ENCODE measurements at regions of chr13 and their contacts with region 1.

Region 1: DNA sequence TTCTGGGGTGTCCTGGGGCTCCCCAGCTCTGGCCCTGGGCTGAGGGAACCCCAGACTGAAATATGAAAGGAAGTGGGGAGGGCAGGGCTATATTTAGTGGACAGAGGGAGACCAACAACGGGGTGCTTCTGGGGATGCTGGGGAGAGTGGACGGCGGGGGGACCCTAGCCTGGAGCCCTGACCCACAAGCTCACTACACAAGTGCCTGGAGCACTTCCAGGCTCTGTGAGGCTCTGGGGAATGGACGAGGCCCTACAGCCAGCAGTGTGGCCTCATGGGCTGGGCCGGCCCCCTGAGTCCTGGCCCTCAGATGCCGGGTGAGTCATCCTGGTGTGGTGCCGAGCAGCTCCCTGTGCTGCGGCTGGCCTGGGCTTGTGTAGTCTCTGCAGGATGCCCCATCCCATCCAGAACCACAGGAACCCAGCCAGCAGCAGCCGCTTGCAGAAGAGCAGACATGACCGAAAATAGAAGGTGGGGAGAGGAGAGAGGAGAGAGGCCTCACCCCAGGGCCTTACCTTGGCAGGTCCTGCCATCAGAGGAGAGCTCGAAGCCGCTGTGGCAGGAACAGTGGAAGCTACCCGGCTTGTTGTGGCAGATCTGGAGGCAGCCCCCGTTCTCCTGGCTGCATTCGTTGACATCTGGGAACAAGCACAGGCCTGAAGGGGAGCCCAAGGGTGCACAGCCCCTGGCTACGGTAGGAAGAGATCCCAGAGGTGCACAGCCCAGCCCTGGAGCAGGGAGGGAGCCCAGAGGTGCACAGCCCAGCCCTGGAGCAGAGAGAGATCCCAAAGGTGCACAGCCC is 26.1 kb downstream of the GAS6 start:
- DNase-seq: peak; percentile 92
- H3K4me3 ChIP-seq: no peak overlapping the region
- H3K27ac ChIP-seq: peak overlapping the region; percentile 90
- H3K4me1 ChIP-seq: peaks cover 13% of the 10 kb centered on the region
- H3K27me3 ChIP-seq: no peaks in the 10 kb centered on the region
- CTCF ChIP-seq: no peak
- POLR2A ChIP-seq: peak; percentile 40

Region 2: DNA sequence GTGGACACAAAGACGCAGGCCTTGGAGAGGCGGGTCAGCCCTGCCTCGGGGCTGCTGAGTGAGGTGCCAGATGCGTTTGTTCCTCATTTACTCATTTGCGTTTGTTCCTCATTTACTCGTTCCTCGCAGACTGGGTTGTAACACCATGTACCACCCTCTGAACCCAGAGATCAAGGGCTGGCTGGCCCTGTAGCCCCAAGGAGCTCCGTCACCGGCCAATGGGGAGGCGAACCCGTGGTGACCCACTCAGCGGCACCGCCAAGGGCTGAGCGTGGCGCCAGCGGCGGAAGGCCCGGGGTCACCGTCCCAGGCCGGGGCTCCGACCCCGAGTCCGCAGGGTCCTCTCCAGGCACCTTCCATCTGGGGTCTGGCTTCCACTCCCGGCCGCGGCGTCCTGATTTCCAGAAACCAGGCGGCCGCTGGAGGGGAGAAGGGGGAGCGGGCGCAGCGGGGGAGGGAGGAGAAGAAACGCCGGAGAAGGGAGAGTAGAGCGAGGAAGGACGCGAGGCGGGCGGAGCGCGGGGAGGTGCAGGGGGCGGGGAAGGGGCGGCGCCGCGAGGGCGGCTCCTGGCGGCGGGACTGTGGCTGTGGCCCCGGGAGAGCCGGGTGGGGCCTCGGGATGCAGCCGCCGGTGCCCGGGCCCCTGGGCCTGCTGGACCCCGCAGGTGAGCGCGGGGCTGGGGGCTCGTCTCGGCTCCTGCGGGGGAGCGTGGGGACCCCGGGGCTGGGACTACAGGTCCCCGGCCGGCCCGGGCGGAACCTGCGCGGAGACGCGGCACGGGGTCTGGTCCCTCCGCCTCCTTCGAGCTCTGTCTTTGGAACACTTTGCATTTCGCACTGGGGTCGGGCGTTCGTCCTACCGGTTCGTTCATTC is 78.9 kb before region 1 on chr13 and contains the start of gene TMEM255B:
- CTCF ChIA-PET with region 1: no interaction called
- POLR2A ChIA-PET with region 1: no interaction called
- dilution Hi-C with region 1: no loop called
- intact Hi-C with region 1: no loop called
- DNase-seq: peak; percentile 81
- H3K4me3 ChIP-seq: peak within 1 kb of the TSS; percentile 80 to 93 (median 91)
- H3K27ac ChIP-seq: peak within 1 kb of the TSS; percentile 87
- H3K4me1 ChIP-seq: peaks cover 18% of the 10 kb centered on the region
- H3K27me3 ChIP-seq: no peaks in the 10 kb centered on the region
- CTCF ChIP-seq: peak in 1 of 2 donors; percentile 28
- POLR2A ChIP-seq: peak; percentile 78
- total RNA-seq, gene TMEM255B: 85.0 and 105 TPM in 2 replicates

Region 3: GRCh38 chr13:113897161-113897560 is 59.4 kb after region 1 on chr13:
- CTCF ChIA-PET with region 1: no interaction called
- POLR2A ChIA-PET with region 1: no interaction called
- dilution Hi-C with region 1: no loop called
- intact Hi-C with region 1: loop called (anchors 2 kb)
- DNase-seq: peak; percentile 56
- H3K4me3 ChIP-seq: no peak overlapping the region
- H3K27ac ChIP-seq: peak overlapping the region; percentile 86
- H3K4me1 ChIP-seq: peaks cover 22% of the 10 kb centered on the region
- H3K27me3 ChIP-seq: no peaks in the 10 kb centered on the region
- CTCF ChIP-seq: no peak
- POLR2A ChIP-seq: peak; percentile 31

Region 4: DNA sequence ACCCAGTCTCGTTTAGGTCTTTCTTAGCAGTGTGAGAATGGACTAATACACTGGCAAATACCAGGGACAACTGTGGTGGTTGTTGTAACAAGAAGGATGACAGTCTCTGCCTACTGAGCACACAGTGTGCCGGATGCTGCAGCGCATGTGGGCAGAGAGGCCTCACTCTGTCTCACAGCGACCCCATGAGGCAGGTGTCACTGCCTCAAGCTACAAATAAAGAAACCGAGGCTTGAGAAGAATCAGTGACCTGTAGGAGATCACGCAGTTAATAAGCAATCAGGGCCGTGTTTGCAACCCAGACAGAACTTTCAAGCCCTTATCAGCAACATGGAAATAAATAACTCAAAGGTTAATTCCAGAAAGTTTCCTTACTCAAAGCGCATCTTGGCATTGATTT is 66.7 kb after region 1 on chr13:
- CTCF ChIA-PET with region 1: interaction called, 15 read pairs
- POLR2A ChIA-PET with region 1: interaction called, 3 read pairs
- dilution Hi-C with region 1: no loop called
- intact Hi-C with region 1: no loop called
- DNase-seq: peak; percentile 62
- H3K4me3 ChIP-seq: no peak overlapping the region
- H3K27ac ChIP-seq: no peak overlapping the region
- H3K4me1 ChIP-seq: no peaks in the 10 kb centered on the region
- H3K27me3 ChIP-seq: peaks cover 0 to 9% of the 10 kb centered on the region in 2 experiments
- CTCF ChIP-seq: peak; percentile 59 to 66
- POLR2A ChIP-seq: no peak

Measured in endothelial cell of umbilical vein (primary cell).